IMR-90 (cell line): ENCODE measurements at regions of chr1 and their contacts with region 1.

Region 1: DNA sequence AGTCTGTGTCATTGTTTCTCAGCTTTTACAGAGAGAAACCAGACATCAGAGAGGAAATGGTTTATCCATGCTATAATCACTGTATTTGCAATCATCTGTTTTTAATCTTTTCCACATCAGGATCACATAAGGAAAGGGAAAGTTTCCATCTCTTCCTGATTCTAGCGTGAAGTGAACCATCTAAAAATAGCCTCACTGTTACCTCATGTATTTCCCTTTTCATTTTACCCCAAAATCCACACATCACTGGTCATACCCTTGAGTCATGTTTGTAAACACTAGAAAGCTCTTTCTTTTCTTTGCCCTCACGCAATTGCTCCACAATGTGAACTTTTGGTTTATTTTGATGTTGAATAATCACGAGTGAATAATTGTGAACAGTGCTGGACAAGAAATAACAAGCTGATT is 146.0 kb downstream of the PLA2G4A start:
- DNase-seq: peak; percentile 99
- ATAC-seq: peak; percentile 87
- H3K4me3 ChIP-seq: peak overlapping the region; percentile 8; the same call in 1 of the 2 replicates
- H3K27ac ChIP-seq: no peak overlapping the region; the same call in 1 of the 2 replicates
- H3K4me1 ChIP-seq: peaks cover 5% of the 10 kb centered on the region
- H3K27me3 ChIP-seq: no peaks in the 10 kb centered on the region
- CTCF ChIP-seq: no peak
- POLR2A ChIP-seq: peak; percentile 34; the same call in 1 of the 2 replicates
- RAD21 ChIP-seq: no peak

Region 2: GRCh38 chr1:187001198-187001889 is 26.6 kb after region 1 on chr1:
- CTCF ChIA-PET with region 1: no interaction called
- POLR2A ChIA-PET with region 1: no interaction called
- dilution Hi-C with region 1: no loop called
- in situ Hi-C with region 1: no loop called
- intact Hi-C with region 1: loop called (anchors 1 kb)
- DNase-seq: peak; percentile 91
- ATAC-seq: peak; percentile 84
- H3K4me3 ChIP-seq: no peak overlapping the region
- H3K27ac ChIP-seq: peak overlapping the region; percentile 12
- H3K4me1 ChIP-seq: no peaks in the 10 kb centered on the region; the same call in 1 of the 2 replicates
- H3K27me3 ChIP-seq: no peaks in the 10 kb centered on the region
- CTCF ChIP-seq: no peak
- POLR2A ChIP-seq: no peak
- RAD21 ChIP-seq: no peak

Region 3: DNA sequence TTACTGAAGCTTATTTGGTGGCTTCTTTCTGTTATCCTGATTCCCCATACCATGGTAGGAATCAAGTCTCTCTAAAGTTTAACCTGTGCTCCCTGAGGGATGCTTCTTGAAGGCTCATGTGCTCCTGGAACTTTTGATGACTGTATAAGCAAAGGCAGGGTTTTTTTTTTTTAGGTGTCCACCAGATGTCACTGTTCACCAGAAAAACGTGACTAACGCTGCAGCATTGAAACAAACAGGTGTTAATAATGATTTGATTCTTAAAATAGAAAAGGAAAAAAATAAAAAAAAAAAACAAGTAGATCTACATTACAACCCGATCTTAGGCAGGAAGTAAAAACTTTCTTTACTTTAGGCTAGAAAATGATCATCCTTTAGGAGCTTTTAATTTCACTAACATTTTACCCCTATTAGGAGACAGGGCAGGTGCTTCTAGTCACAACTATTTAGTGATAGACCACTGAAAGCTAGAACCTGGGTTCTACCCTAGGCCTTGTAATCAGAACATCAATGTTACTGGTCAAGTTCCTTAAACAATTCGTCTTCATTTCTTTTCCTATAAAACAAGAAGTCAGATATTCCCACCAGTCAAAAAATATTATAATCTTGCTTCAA is 76.9 kb after region 1 on chr1:
- CTCF ChIA-PET with region 1: no interaction called
- POLR2A ChIA-PET with region 1: no interaction called
- dilution Hi-C with region 1: no loop called
- in situ Hi-C with region 1: no loop called
- intact Hi-C with region 1: no loop called
- DNase-seq: peak; percentile 58
- ATAC-seq: no peak
- H3K4me3 ChIP-seq: no peak overlapping the region
- H3K27ac ChIP-seq: no peak overlapping the region
- H3K4me1 ChIP-seq: no peaks in the 10 kb centered on the region
- H3K27me3 ChIP-seq: peaks cover 1% of the 10 kb centered on the region; the same call in 1 of the 2 replicates
- CTCF ChIP-seq: peak; percentile 54
- POLR2A ChIP-seq: no peak
- RAD21 ChIP-seq: peak; percentile 67